ENCODE measurements at regions of chr9 and their contacts with region 1.

Region 1: GRCh38 chr9:122350638-122351355 is 20.0 kb upstream of the PTGS1 start:
- DNase-seq: peak; percentile 82
- ATAC-seq: peak; percentile 87 to 90
- H3K4me3 ChIP-seq: no peak overlapping the region
- H3K27ac ChIP-seq: no peak overlapping the region
- H3K4me1 ChIP-seq: peaks cover 19% of the 10 kb centered on the region
- H3K27me3 ChIP-seq: no peaks in the 10 kb centered on the region
- CTCF ChIP-seq: peak; percentile 99

Region 2: DNA sequence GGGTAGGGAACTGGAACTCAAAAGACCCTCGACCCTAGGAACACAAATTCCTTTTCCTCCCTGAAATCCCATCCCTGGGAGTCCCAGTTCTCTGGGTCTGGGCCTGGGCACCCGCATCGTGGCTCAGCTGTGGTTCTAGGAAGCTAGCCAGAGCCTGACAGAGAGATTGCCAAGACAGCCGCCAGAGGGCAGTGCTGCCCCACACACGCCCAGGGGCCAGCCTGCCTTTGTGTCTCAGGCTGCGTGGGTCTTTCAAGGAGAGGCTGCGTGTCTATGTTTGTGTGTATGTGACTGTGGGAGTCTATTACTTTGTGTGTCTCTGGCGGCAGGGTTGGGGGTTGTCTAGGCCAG is 225.7 kb before region 1 on chr9:
- intact Hi-C with region 1: loop called (anchors 10 kb)
- DNase-seq: peak; percentile 81
- ATAC-seq: peak; percentile 87
- H3K4me3 ChIP-seq: no peak overlapping the region
- H3K27ac ChIP-seq: no peak overlapping the region
- H3K4me1 ChIP-seq: peaks cover 33% of the 10 kb centered on the region
- H3K27me3 ChIP-seq: peaks cover 31% of the 10 kb centered on the region
- CTCF ChIP-seq: peak; percentile 97

Region 3: DNA sequence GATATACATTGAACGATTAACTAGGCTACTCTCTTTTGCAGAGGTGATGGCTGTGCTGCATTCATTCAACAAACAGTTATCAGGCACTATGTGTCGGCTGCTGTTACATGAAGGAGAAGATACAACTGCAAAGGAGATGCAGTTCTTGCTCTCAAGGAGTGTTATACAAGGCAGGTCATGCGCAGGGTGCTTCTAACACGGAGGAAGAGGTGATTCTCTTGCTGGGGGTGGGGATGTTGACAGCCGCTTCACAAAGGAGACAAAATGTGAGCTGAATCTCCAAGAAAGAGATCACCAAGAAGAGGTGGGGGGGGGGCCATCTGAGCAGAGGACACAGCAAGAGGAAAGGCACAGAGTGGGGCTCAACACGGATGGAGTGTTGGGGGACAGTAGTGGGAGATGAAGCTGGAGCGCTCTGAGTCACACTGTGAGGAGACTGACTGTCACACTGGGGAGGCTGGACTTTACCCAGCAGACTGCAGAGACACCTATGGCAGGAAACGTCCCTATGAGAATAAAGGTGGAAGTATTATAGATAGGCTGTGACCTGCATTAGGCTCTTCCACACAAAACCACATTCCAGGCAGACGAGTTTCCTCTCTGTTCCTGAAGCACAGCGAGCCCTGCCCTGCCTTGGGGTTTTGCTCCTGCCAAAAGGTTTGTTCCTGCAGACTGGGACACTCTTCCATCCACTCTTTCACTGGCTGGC is 212.1 kb before region 1 on chr9:
- intact Hi-C with region 1: no loop called
- DNase-seq: no peak
- ATAC-seq: no peak
- H3K4me3 ChIP-seq: no peak overlapping the region
- H3K27ac ChIP-seq: no peak overlapping the region
- H3K4me1 ChIP-seq: peaks cover 19% of the 10 kb centered on the region
- H3K27me3 ChIP-seq: no peaks in the 10 kb centered on the region
- CTCF ChIP-seq: no peak

Region 4: GRCh38 chr9:122580360-122580759 is 229.6 kb after region 1 on chr9:
- intact Hi-C with region 1: no loop called
- DNase-seq: no peak
- ATAC-seq: no peak
- H3K4me3 ChIP-seq: no peak overlapping the region
- H3K27ac ChIP-seq: no peak overlapping the region
- H3K4me1 ChIP-seq: no peaks in the 10 kb centered on the region
- H3K27me3 ChIP-seq: no peaks in the 10 kb centered on the region
- CTCF ChIP-seq: no peak